ENCODE measurements at regions of chr10 and their contacts with region 1.

Region 1: GRCh38 chr10:102420810-102421644 is at the start of gene FBXL15:
- DNase-seq: peak; percentile 93
- ATAC-seq: peak; percentile 82
- H3K4me3 ChIP-seq: peak within 1 kb of the TSS; percentile 91 to 94
- H3K27ac ChIP-seq: peak within 1 kb of the TSS; percentile 98
- H3K4me1 ChIP-seq: peaks cover 11% of the 10 kb centered on the region
- H3K27me3 ChIP-seq: no peaks in the 10 kb centered on the region
- CTCF ChIP-seq: no peak
- total RNA-seq, gene FBXL15: 7.9 TPM

Region 2: GRCh38 chr10:102342958-102343357 is 78.1 kb before region 1 on chr10:
- CTCF ChIA-PET with region 1: no interaction called
- POLR2A ChIA-PET with region 1: interaction called, 10 read pairs
- in situ Hi-C with region 1: no loop called
- intact Hi-C with region 1: no loop called
- DNase-seq: no peak
- ATAC-seq: no peak
- H3K4me3 ChIP-seq: no peak overlapping the region
- H3K27ac ChIP-seq: no peak overlapping the region
- H3K4me1 ChIP-seq: no peaks in the 10 kb centered on the region
- H3K27me3 ChIP-seq: no peaks in the 10 kb centered on the region
- CTCF ChIP-seq: no peak

Region 3: DNA sequence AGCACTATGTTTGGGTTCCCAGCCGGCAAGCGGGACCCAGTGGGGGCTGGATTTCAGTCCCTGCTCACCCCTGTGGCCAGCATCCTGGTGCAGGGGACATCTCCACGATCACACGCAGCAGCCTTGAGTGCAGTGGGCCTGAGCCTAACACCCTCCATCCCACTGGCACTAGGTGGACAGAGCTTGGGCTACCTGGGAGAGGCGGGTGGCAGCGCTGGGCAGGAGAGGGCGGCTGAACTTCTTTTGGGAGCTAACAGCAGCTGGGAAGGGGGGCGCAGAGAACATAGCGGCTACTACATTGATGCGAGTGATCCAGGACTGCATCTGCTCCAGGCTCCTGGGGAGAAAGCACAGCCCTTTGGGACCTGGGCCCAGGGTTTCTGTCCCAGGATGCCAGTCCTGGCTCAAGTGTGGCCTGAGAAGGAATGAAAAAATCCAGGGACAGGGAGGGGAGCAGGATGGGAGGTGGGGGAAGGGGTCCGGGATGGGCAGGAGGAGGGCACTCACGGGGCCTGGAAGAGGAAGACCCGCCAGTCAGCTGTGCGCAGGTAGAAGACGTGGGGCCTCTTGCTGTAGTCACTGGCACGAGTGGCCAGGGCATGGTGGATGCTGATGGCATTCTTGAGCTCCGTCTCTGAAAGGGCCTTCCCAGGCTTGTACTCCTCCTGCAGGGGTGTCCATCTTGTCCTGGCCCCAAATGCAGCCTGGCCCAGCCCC is 16.5 kb before region 1 on chr10:
- CTCF ChIA-PET with region 1: interaction called, 14 read pairs
- POLR2A ChIA-PET with region 1: interaction called, 3 read pairs
- in situ Hi-C with region 1: no loop called
- intact Hi-C with region 1: no loop called
- DNase-seq: no peak
- ATAC-seq: no peak
- H3K4me3 ChIP-seq: no peak overlapping the region
- H3K27ac ChIP-seq: no peak overlapping the region
- H3K4me1 ChIP-seq: peaks cover 27% of the 10 kb centered on the region
- H3K27me3 ChIP-seq: no peaks in the 10 kb centered on the region
- CTCF ChIP-seq: no peak

Measured in Panc1 (cell line).